WTC11 (cell line): ENCODE measurements at regions of chr1 and their contacts with region 1.

Region 1: GRCh38 chr1:39973503-39974135 is 18.7 kb downstream of the MFSD2A start:
- DNase-seq: peak; percentile 82
- ATAC-seq: peak; percentile 83
- H3K4me3 Mint-ChIP-seq: no peak overlapping the region
- H3K27ac Mint-ChIP-seq: peak overlapping the region; percentile 12
- H3K4me1 Mint-ChIP-seq: peaks cover 15% of the 10 kb centered on the region
- H3K27me3 Mint-ChIP-seq: no peaks in the 10 kb centered on the region; the same call in 1 of the 2 replicates
- CTCF ChIP-seq: peak; percentile 97

Region 2: DNA sequence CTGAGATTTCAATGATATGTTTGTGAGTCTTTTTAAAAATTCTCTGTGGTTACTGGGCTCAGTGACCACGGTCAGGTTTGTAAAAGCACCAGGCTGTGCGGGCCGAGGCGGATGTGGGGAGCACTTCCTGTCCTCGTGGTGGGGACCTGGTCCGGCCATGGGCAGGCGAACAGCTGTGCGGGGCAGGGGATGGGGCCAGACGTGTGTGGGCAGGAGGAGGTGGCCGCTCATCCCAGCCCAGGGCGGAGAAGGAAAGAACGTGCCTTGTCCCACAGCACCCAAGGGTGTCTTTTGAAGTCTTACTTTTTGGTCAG is 197.3 kb before region 1 on chr1:
- CTCF ChIA-PET with region 1: no interaction called
- POLR2A ChIA-PET with region 1: no interaction called
- DNase-seq: no peak
- ATAC-seq: no peak
- H3K4me3 Mint-ChIP-seq: no peak overlapping the region
- H3K27ac Mint-ChIP-seq: no peak overlapping the region
- H3K4me1 Mint-ChIP-seq: 0 out of 2 replicates have a peak, but pooled peaks cover 3% of the 10 kb centered on the region
- H3K27me3 Mint-ChIP-seq: peaks cover 26% of the 10 kb centered on the region
- CTCF ChIP-seq: no peak

Region 3: DNA sequence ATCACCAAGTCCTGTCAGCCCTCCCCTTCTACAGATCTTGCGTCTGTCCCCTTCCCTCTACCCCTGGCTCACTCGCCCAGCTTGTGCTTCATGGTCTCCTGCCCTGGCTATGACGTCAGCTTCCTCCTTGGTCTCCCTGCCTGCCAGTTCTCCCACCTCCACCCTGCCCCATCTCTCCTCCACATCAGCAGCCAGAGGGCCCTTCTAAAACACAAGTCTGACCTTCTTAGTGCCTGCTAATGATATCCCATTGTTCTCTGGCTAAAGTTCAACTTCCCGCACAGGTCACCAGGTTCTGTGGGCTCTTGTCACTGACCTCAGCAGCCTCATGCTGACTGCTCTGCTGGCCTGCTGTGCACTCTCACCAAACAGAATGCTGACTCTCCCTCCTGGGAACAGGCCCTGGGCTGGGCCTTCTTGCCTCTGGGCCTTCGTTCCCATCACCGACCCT is 47.3 kb before region 1 on chr1:
- CTCF ChIA-PET with region 1: interaction called, 144 read pairs
- POLR2A ChIA-PET with region 1: no interaction called
- DNase-seq: no peak
- ATAC-seq: no peak
- H3K4me3 Mint-ChIP-seq: no peak overlapping the region
- H3K27ac Mint-ChIP-seq: no peak overlapping the region
- H3K4me1 Mint-ChIP-seq: peaks cover 31% of the 10 kb centered on the region
- H3K27me3 Mint-ChIP-seq: peaks cover 7% of the 10 kb centered on the region; the same call in 1 of the 2 replicates
- CTCF ChIP-seq: no peak